ENCODE measurements at regions of chr1 and their contacts with region 1.

Region 1: GRCh38 chr1:161738627-161739287 is 10.8 kb upstream of the DUSP12 start:
- DNase-seq: peak; percentile 95
- ATAC-seq: peak; percentile 90
- H3K4me3 Mint-ChIP-seq: peak overlapping the region; percentile 32
- H3K27ac Mint-ChIP-seq: peak overlapping the region; percentile 85
- H3K4me1 Mint-ChIP-seq: peaks cover 64% of the 10 kb centered on the region
- H3K27me3 Mint-ChIP-seq: peaks cover 8% of the 10 kb centered on the region

Region 2: DNA sequence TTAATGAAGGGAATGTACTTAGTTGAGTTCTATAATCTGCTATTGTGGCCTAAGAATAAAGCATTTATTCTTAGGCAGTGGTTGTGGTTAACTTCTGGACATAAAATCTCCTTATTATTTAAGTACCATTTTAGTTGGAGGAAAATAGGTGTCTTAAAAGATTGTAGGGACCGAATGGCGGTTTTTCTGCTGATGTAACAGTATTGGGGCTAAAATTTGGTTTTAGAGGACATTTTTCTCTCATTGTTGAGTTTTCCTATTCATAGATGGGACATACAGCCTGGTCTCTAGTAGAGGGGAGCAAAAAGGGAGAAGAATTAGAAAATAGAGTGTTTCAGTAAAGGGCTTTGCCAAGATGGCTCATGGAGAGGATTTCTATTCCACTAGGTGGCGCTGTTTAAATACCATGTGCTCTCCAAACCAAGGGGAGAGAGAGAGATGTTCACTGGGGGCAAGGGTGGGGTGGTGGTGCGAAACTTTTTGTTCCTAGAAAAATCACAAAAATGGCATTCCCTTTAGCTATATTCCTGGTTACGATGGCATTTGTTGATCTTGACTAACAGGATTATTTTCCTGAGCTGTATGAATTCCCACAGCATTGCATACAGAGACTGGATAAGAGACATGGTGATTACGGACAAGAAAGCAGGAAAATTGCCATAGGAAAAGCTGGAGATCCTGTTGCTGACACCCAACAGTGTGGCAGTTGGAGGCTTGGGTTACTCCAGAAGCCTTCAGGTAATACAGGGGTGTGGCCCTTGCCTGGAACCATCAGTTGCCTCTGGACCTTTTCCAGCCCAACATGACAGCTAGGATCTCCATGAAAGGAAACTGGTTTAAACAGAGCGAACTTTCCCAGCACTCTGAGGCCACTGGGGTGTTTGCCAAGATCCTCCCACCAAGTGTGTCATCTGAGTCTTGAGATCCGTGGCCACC is 251.7 kb before region 1 on chr1:
- CTCF ChIA-PET with region 1: interaction called, 65 read pairs
- DNase-seq: peak; percentile 64
- ATAC-seq: peak; percentile 82
- H3K4me3 Mint-ChIP-seq: no peak overlapping the region
- H3K27ac Mint-ChIP-seq: no peak overlapping the region
- H3K4me1 Mint-ChIP-seq: peaks cover 28% of the 10 kb centered on the region
- H3K27me3 Mint-ChIP-seq: peaks cover 42% of the 10 kb centered on the region

Region 3: DNA sequence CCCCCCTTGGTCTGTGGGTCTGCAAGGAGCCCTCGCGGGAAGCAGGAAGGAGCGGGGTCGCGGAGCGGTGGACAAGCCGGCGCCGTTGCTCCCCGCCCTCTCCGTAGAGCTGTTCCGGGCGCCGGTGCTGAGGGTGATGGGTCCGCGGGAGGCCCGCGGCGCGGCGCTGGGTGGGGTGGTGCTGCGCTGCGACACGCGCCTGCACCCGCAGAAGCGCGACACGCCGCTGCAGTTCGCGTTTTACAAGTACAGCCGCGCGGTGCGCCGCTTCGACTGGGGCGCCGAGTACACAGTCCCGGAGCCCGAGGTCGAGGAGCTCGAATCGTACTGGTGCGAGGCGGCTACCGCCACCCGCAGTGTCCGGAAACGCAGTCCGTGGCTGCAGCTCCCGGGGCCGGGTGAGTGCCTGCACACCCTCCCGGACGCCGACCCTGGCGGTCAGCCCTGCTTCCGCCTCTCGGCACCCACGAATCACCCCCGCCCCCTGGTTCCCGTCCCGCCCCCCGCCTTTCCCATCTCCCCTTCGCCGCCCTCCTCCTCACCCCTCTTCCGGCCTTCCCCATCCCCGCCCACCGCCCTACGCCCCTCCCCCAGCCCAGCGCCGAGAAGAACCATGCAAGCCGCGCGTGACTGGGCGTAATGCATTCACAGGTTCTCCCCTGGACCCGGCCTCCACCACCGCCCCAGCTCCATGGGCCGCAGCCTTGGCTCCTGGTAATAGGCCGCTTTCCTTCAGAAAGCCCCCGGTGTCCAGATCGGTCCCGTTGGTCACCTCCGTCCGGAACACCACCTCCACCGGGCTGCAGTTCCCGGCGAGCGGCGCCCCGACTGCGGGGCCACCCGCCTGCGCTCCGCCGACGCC is 11.9 kb before region 1 on chr1:
- CTCF ChIA-PET with region 1: interaction called, 118 read pairs
- DNase-seq: peak; percentile 84
- ATAC-seq: peak; percentile 71
- H3K4me3 Mint-ChIP-seq: peak overlapping the region; percentile 79
- H3K27ac Mint-ChIP-seq: peak overlapping the region; percentile 89
- H3K4me1 Mint-ChIP-seq: peaks cover 55% of the 10 kb centered on the region
- H3K27me3 Mint-ChIP-seq: peaks cover 61% of the 10 kb centered on the region

Region 4: GRCh38 chr1:161749509-161750407 is 11.0 kb after region 1 on chr1 and contains the start of gene DUSP12:
- CTCF ChIA-PET with region 1: interaction called, 15 read pairs
- DNase-seq: peak; percentile 95
- ATAC-seq: peak; percentile 96
- H3K4me3 Mint-ChIP-seq: peak within 1 kb of the TSS; percentile 99
- H3K27ac Mint-ChIP-seq: peak within 1 kb of the TSS; percentile 98
- H3K4me1 Mint-ChIP-seq: peaks cover 47% of the 10 kb centered on the region
- H3K27me3 Mint-ChIP-seq: peaks cover 16% of the 10 kb centered on the region
- total RNA-seq, gene DUSP12: 27.2 to 34.5 TPM